Dendritic cell treated with granulocyte-macrophage colony-stimulating factor and Interleukin-4, amounts not matched to agents 40 ng/mL and 50 ng/mL, for 4 days (primary cell): ENCODE measurements at regions of chr19 and their contacts with region 1.

Region 1: DNA sequence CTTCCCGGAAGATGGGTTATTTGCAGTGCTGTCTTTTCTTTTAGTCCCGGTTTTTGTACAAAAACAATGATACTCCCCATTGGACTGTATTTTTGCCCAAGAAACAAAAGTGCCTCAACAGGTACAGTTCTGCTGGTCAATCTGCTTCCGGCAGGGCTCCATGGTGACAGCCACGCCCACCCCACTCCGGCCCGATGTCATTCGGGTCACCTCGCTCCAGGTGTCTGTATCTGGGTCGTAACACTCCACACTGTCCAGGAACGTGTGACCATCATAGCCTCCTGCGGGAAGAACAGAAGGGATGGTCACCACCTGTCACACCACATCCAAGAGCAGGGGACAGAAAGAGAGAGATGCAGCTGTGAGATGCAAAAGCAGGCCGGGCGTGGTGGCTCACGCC is 16.6 kb downstream of the KEAP1 start:
- H3K4me3 Mint-ChIP-seq: no peak overlapping the region
- H3K27ac Mint-ChIP-seq: no peak overlapping the region
- H3K4me1 Mint-ChIP-seq: peaks cover 11% of the 10 kb centered on the region
- H3K27me3 Mint-ChIP-seq: no peaks in the 10 kb centered on the region

Region 2: GRCh38 chr19:10372690-10373089 is 113.8 kb before region 1 on chr19:
- intact Hi-C with region 1: no loop called
- H3K4me3 Mint-ChIP-seq: peak overlapping the region; percentile 32
- H3K27ac Mint-ChIP-seq: peak overlapping the region; percentile 78
- H3K4me1 Mint-ChIP-seq: peaks cover 45% of the 10 kb centered on the region
- H3K27me3 Mint-ChIP-seq: no peaks in the 10 kb centered on the region

Region 3: DNA sequence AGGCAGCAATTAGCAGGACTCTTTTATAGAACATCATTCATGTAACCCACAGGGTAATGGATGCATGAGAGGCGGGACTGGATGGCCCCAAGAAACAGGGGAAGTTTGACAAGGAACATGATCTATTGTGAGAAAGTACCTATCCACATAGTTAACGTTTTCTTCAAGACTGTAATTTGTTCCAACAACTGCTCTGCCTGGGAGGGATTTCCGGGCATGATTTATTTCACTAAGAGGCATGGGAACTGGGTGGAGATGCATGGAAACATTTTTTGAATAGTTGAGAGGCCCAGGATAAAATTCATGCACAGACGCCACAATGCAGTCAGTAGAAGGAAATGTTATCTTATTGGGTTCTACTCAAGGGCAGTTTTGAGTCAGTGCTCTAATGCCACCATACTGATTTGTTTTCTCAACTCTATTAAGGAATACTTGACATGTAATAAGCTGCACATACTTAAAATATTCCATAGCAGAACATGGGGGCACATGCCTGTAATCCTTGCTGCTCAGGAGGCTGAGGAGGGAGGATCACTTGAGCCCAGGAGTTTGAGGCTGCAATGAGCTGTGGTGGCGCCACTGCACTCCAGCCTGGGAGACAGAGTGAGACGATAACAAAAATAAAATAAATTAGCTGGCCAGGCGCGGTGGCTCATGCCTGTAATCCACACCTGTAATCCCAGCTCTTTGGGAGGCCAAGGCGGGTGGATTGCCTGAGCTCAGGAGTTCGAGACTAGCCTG is 47.3 kb after region 1 on chr19:
- intact Hi-C with region 1: no loop called
- H3K4me3 Mint-ChIP-seq: no peak overlapping the region
- H3K27ac Mint-ChIP-seq: no peak overlapping the region
- H3K4me1 Mint-ChIP-seq: peaks cover 10% of the 10 kb centered on the region
- H3K27me3 Mint-ChIP-seq: peaks cover 26% of the 10 kb centered on the region

Region 4: DNA sequence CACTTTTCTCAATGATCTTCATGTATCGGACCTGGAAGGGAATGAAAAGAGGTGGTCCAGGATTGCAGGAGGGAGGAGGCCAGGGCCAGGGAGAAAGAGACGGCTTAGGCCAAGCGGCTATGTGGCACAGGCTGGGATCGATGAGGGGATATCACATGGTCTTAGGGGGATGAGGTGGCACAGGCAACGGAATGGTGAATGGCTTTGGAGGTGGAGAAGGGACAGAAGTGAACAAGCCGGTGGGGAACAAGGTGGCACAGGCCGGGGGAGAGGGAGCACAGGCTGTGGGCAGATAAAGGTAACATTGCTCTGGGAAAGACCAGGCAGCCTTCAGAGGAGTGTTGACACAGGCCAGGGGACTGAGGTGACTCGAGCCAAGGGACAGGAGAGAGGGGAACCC is 87.9 kb after region 1 on chr19:
- intact Hi-C with region 1: loop called (anchors 10 kb)
- H3K4me3 Mint-ChIP-seq: no peak overlapping the region
- H3K27ac Mint-ChIP-seq: no peak overlapping the region
- H3K4me1 Mint-ChIP-seq: peaks cover 17% of the 10 kb centered on the region
- H3K27me3 Mint-ChIP-seq: peaks cover 6% of the 10 kb centered on the region